Activated naive CD4-positive, alpha-beta T cell treated with anti-CD3 and anti-CD28 coated beads for 36 hours (primary cell): ENCODE measurements at regions of chr5 and their contacts with region 1.

Region 1: GRCh38 chr5:67149951-67150523 is 46.6 kb downstream of the CD180 start:
- DNase-seq: no peak
- H3K4me3 Mint-ChIP-seq: no peak overlapping the region
- H3K27ac Mint-ChIP-seq: no peak overlapping the region
- H3K4me1 Mint-ChIP-seq: no peaks in the 10 kb centered on the region
- H3K27me3 Mint-ChIP-seq: no peaks in the 10 kb centered on the region

Region 2: DNA sequence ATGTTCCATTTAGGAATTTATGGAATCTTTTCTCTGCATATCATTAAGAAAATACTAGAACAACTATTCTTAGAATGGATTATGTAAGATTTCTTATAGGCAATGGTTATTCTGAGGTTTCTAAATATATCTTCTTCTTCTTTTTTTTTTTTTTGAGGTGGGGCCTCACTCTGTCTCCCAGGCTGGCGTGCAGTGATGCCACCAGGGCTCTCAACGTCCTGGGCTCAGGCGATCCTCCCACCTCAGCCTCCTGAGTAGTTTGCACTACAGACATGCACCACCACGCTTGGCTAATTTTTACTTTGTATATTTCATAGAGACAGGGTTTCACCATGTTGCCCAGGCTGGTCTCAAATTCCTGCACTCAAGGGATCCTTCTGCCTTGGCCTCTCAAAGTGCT is 868.7 kb before region 1 on chr5:
- CTCF ChIA-PET with region 1: no interaction called
- intact Hi-C with region 1: no loop called
- DNase-seq: no peak
- H3K4me3 Mint-ChIP-seq: no peak overlapping the region
- H3K27ac Mint-ChIP-seq: no peak overlapping the region
- H3K4me1 Mint-ChIP-seq: no peaks in the 10 kb centered on the region
- H3K27me3 Mint-ChIP-seq: peaks cover 4% of the 10 kb centered on the region

Region 3: GRCh38 chr5:66814146-66814991 is 335.7 kb before region 1 on chr5:
- CTCF ChIA-PET with region 1: no interaction called
- intact Hi-C with region 1: loop called (anchors 5 kb)
- DNase-seq: peak; percentile 79
- H3K4me3 Mint-ChIP-seq: no peak overlapping the region
- H3K27ac Mint-ChIP-seq: no peak overlapping the region
- H3K4me1 Mint-ChIP-seq: peaks cover 3% of the 10 kb centered on the region
- H3K27me3 Mint-ChIP-seq: no peaks in the 10 kb centered on the region

Region 4: DNA sequence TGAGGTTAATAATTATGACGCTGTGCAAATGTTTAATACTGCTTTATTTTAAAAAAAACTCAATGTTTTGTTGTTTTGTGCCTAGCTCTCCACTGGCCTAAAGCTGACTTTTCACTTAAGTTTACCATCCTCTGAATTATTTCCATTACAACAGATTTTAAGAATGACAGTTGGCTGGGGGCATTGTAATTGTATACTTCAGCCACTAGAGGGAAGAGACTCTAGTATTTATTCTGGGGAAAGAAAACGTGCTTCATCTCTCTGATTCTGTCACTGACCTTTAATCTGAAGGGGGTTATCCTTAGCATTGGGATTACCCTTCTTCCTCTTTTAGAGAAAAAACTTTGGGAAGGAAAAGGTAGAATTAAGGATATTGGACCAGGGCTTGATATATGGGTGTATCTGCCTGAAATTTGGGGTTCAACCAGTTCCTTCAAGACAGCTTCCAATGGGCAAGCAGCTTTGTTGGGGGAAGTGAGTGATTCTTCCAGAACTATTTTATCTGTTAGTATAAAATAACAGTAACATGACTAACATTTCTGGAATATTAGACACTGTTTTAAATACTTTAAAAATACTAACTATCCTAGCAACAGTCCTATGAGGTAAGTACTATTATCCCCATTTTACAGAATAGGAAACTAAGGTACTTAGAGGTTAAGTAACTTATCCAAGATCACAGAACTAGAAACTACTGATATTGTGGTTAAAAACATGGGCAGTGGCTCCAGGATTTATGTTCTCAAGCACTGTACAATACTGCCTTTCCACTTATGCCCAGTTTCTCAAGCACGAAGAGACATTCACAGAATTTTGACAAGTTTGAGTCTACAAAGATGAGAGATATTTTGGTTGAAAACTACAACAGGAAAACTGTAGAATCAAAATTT is 161.8 kb before region 1 on chr5:
- CTCF ChIA-PET with region 1: interaction called, 7 read pairs
- intact Hi-C with region 1: loop called (anchors 1 kb)
- DNase-seq: no peak
- H3K4me3 Mint-ChIP-seq: no peak overlapping the region
- H3K27ac Mint-ChIP-seq: no peak overlapping the region
- H3K4me1 Mint-ChIP-seq: peaks cover 8% of the 10 kb centered on the region
- H3K27me3 Mint-ChIP-seq: no peaks in the 10 kb centered on the region

Region 5: DNA sequence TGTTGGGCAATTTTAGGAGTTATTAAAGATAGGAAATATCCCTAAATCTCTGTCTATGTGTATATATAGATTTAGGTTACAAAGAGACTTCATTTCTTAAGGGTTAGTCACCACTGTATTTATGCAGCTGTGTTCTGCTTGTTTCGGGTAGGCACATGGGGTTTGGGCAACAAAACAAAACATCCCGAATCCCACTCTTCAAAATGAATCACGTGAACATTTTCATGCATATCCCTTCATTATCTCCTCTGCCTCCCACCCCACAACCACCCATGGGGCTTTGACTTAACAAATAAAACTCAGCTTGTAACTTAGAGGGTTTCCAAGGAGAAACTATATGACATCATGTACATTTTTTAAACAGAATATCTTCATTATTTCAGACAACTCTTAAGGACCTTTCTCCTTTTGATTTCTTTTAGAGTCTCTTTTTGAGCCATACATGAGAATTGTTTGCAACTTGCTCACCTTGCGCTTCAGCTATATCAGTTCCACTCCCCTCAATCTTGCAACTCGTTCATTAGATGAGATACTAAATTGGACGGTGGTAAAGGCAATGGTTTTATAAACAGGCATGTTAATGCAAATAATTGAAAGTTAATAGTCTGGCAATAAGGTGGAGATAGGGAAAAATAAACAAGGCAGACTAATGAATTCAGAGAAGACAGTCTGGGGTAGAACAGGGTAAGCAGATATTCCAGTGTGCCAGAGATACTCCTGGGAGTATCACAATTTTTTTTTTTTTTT is 90.1 kb before region 1 on chr5:
- CTCF ChIA-PET with region 1: no interaction called
- intact Hi-C with region 1: no loop called
- DNase-seq: no peak
- H3K4me3 Mint-ChIP-seq: no peak overlapping the region
- H3K27ac Mint-ChIP-seq: no peak overlapping the region
- H3K4me1 Mint-ChIP-seq: peaks cover 13% of the 10 kb centered on the region
- H3K27me3 Mint-ChIP-seq: no peaks in the 10 kb centered on the region